IMR-90 (cell line): ENCODE measurements at regions of chr3 and their contacts with region 1.

Region 1: GRCh38 chr3:64306745-64307144 is 81.5 kb upstream of the PRICKLE2 start:
- DNase-seq: no peak
- ATAC-seq: no peak
- H3K4me3 ChIP-seq: no peak overlapping the region
- H3K27ac ChIP-seq: no peak overlapping the region
- H3K4me1 ChIP-seq: peaks cover 1% of the 10 kb centered on the region
- H3K27me3 ChIP-seq: no peaks in the 10 kb centered on the region
- CTCF ChIP-seq: no peak
- POLR2A ChIP-seq: no peak
- RAD21 ChIP-seq: no peak

Region 2: GRCh38 chr3:64248247-64248646 is 58.5 kb before region 1 on chr3:
- CTCF ChIA-PET with region 1: no interaction called
- POLR2A ChIA-PET with region 1: no interaction called
- dilution Hi-C with region 1: no loop called
- in situ Hi-C with region 1: no loop called
- intact Hi-C with region 1: no loop called
- DNase-seq: no peak
- ATAC-seq: no peak
- H3K4me3 ChIP-seq: no peak overlapping the region
- H3K27ac ChIP-seq: no peak overlapping the region
- H3K4me1 ChIP-seq: peaks cover 2% of the 10 kb centered on the region
- H3K27me3 ChIP-seq: no peaks in the 10 kb centered on the region
- CTCF ChIP-seq: no peak
- POLR2A ChIP-seq: no peak
- RAD21 ChIP-seq: no peak

Region 3: DNA sequence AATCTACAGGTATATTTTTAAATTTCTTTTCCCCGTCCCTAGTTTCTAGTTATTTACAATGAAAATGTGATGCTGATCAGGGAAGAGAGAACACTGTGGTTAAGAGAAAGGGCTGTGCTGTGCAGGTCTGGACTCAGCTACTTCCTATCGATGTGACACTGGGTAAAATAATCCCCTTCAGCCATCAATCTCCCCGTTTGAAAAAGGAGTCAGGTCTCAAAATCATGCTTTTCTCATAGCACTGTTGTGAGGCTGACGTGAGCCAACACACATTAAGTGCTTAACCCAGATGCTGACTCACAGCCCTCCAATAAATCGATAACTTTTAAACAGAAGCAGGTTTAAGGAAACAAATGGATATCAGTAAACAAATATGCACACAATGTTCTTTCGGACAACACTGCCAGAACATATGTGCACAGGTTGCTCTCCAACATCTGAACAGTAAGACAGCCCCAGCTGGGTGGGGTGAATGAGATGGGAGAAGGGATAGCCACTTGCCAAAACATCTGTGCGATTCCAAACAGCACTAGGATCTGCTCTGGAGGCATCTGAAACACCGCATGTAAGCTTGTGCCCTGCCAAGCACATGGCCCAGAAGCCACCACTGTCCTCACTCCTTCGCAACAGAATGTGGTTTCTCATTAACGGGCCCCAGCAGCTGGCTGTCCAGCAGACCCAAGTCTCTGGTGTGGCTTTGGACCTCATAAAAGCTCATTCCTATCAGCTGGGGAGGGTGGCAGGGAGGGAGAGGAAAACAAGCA is 61.7 kb after region 1 on chr3:
- CTCF ChIA-PET with region 1: no interaction called
- POLR2A ChIA-PET with region 1: no interaction called
- dilution Hi-C with region 1: no loop called
- in situ Hi-C with region 1: no loop called
- intact Hi-C with region 1: loop called (anchors 5 kb)
- DNase-seq: no peak
- ATAC-seq: peak; percentile 44
- H3K4me3 ChIP-seq: no peak overlapping the region
- H3K27ac ChIP-seq: no peak overlapping the region
- H3K4me1 ChIP-seq: no peaks in the 10 kb centered on the region; the same call in 1 of the 2 replicates
- H3K27me3 ChIP-seq: no peaks in the 10 kb centered on the region
- CTCF ChIP-seq: no peak
- POLR2A ChIP-seq: no peak
- RAD21 ChIP-seq: no peak